ENCODE measurements at regions of chr5 and their contacts with region 1.

Region 1: GRCh38 chr5:157718519-157718918 is 12.7 kb upstream of the THG1L start:
- DNase-seq: peak; percentile 72
- H3K4me3 Mint-ChIP-seq: peak overlapping the region; percentile 27
- H3K27ac Mint-ChIP-seq: peak overlapping the region; percentile 35
- H3K4me1 Mint-ChIP-seq: peaks cover 36% of the 10 kb centered on the region
- H3K27me3 Mint-ChIP-seq: no peaks in the 10 kb centered on the region

Region 2: DNA sequence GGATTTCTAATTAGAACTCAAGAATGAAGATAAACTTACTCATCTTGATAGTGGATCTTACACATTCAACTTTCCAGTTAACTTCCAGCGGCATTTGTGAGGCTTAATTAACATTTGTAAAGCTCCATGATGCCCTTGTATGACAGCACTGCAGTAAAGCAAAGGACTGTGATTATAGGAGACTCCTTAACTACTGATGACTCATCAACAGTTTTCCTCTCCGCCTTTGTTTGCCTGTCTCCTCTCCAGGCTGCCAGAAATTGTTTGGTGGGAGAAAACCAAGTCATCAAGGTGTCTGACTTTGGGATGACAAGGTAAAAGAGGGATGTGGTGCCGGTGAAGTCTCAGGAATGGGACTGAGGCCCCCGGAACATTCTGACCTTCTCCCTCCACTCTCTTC is 473.0 kb before region 1 on chr5:
- intact Hi-C with region 1: no loop called
- DNase-seq: no peak
- H3K4me3 Mint-ChIP-seq: peak overlapping the region; percentile 16
- H3K27ac Mint-ChIP-seq: peak overlapping the region; percentile 76
- H3K4me1 Mint-ChIP-seq: peaks cover 67% of the 10 kb centered on the region
- H3K27me3 Mint-ChIP-seq: no peaks in the 10 kb centered on the region

Region 3: GRCh38 chr5:157265714-157266285 is 452.7 kb before region 1 on chr5 and contains the start of gene CYFIP2:
- intact Hi-C with region 1: no loop called
- DNase-seq: peak; percentile 96
- H3K4me3 Mint-ChIP-seq: peak within 1 kb of the TSS; percentile 96
- H3K27ac Mint-ChIP-seq: peak within 1 kb of the TSS; percentile 98
- H3K4me1 Mint-ChIP-seq: peaks cover 68% of the 10 kb centered on the region
- H3K27me3 Mint-ChIP-seq: no peaks in the 10 kb centered on the region
- total RNA-seq, gene CYFIP2: 180 and 193 TPM in 2 replicates

Region 4: DNA sequence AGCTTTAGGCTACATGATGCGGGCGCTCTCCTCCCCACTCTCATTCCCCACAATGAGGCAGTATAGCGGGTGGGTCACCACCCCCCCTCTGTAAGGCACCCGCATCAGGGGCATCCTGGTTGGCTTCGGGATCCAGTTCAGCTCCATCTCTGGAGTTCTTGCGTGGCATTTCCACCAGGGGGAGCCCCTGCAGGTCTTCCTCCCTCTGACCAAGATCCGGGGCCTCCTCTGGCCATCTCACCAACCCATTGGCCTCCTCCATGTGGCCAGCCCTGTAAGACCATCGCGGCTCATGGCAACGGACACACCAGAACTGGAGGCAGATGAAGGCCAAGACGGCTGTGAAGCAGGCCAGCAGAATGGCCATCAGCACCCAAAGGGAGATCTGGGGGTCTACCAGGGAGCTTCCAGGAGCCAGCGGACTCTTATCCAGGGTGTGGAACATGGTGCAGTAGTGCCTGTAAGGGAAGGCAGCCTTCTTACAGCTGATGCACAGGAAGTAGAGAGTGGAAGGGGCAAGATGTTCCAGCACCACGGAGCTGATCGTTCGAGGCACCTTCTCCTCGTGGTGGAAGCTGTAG is 375.6 kb before region 1 on chr5:
- intact Hi-C with region 1: loop called (anchors 5 kb)
- DNase-seq: peak; percentile 77
- H3K4me3 Mint-ChIP-seq: no peak overlapping the region
- H3K27ac Mint-ChIP-seq: peak overlapping the region; percentile 35
- H3K4me1 Mint-ChIP-seq: peaks cover 16% of the 10 kb centered on the region
- H3K27me3 Mint-ChIP-seq: no peaks in the 10 kb centered on the region

Region 5: GRCh38 chr5:157431544-157432200 is 286.8 kb before region 1 on chr5:
- intact Hi-C with region 1: loop called (anchors 2 kb)
- DNase-seq: peak; percentile 84
- H3K4me3 Mint-ChIP-seq: no peak overlapping the region
- H3K27ac Mint-ChIP-seq: no peak overlapping the region
- H3K4me1 Mint-ChIP-seq: peaks cover 11% of the 10 kb centered on the region
- H3K27me3 Mint-ChIP-seq: peaks cover 30% of the 10 kb centered on the region

Region 6: DNA sequence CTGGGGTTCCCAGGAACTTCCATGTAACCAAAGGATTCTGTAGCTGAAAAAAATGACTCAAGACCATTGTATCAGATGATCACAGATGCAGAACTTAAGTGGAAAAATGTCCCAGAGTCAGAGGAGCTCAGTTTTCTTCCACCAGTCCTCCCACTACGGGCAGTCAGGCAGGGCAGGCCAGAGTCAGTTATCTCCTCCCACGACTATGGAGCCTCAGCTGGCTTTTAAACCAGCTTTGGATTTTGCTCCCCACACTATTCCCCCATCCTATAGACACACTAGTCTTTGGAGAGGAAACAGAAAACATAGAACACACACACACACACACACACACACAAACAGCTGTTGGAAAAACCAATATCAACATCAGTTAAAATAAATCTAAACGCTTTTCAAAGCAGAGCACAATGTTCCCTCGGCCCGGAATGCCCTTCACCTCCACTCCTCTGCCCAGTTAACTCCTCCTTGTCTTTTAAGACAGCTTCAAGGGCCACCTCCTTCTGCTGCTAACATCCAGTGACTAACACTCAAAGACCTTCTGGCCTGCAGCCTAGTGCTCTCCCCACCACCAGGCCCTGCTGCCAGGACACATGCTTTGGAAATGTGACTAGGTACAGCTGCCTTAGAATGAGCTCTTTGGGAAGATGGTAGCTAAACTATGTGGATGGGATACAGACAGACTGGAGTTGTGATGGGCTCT is 201.7 kb before region 1 on chr5:
- intact Hi-C with region 1: loop called (anchors 5 kb)
- DNase-seq: no peak
- H3K4me3 Mint-ChIP-seq: no peak overlapping the region
- H3K27ac Mint-ChIP-seq: peak overlapping the region; percentile 76
- H3K4me1 Mint-ChIP-seq: peaks cover 64% of the 10 kb centered on the region
- H3K27me3 Mint-ChIP-seq: no peaks in the 10 kb centered on the region

Region 7: GRCh38 chr5:157571357-157571827 is 147.1 kb before region 1 on chr5:
- intact Hi-C with region 1: loop called (anchors 5 kb)
- DNase-seq: peak; percentile 83
- H3K4me3 Mint-ChIP-seq: peak overlapping the region; percentile 91
- H3K27ac Mint-ChIP-seq: peak overlapping the region; percentile 94
- H3K4me1 Mint-ChIP-seq: peaks cover 62% of the 10 kb centered on the region
- H3K27me3 Mint-ChIP-seq: no peaks in the 10 kb centered on the region

Region 8: DNA sequence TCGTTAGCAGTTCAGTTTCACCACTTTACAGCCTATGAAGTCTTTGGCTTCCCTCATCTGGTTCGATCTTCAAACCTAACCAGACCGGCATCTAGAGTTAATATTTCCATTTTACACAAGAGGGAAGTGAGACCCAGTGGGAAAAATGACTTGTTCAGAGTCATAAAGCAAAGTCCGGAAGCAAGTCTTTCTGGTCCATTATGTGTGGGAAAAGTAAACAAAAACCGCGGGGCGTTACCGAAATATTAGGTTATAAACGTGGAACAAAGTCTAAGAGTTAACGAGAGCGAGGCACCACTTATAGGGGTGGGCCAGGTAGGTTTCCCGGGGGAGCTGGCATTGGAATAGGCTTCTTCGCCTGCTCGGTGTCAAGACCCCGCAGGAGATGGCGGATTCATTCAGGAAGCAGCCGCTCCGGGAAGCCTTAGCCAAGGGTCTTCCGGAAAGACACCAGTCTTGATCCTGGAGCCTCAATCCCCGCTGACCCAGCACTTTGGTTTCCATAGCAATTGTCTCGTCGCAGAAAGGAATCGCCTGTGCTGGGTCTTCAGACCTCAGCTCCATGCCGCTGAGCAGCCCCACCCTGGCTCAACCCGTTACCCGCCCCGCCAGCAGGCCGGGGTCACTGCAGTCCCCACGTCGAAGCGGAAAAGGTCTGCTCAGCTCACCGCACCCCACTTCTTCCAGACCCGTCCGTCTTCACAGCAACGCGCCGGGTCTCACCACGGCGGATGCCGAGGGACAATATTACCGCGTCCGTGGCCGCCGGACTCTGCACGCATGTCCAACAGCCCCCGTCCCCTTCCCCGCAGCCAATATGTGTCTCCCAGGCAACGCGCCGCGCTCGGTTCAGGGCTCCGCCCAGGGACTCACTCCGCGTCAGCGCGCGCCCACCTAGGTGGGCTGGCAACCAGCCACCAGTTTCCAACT is 47.6 kb before region 1 on chr5 and contains the start of gene C5orf52:
- intact Hi-C with region 1: loop called (anchors 1 kb)
- DNase-seq: peak; percentile 79
- H3K4me3 Mint-ChIP-seq: peak within 1 kb of the TSS; percentile 96
- H3K27ac Mint-ChIP-seq: peak within 1 kb of the TSS; percentile 91
- H3K4me1 Mint-ChIP-seq: peaks cover 34% of the 10 kb centered on the region
- H3K27me3 Mint-ChIP-seq: peaks cover 17% of the 10 kb centered on the region
- total RNA-seq, gene C5orf52: 0.42 TPM in 1 of 2 replicates, not detected in the other

Measured in activated CD4-positive, alpha-beta T cell treated with anti-CD3 and anti-CD28 coated beads, Interleukin-2, amount 10 ng/mL, durations not matched to agents 24 days and 14 days (primary cell).